B cell (primary cell): ENCODE measurements at regions of chr19 and their contacts with region 1.

Region 1: DNA sequence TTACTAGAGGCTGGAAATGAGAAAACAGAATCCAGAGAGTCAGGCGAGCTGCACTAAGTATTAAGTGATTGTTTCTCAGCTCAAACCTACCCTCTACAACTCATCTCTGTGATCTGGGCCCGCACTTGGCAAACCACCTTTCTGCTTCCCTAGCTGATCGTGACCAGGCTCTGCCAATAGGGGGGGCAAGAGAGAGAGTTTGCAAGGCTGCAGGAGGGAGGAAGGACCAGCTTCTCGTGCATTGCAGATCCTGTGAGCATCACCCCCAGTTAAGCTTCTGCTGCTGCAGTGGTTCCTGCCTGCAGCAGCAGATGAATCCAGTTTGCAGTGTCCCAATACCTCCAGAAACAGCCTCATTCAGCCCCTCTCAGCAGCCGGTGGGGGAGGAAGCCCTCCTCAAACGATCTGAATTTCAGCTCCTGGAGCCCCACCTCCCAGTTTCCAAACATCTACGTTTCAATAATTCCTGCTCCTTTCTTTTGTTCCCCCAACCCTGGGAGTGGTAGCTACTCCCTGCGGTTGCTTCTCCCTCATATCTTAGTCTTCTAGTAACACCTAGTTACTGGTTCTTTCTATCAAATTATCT is 20.0 kb downstream of the XRCC1 start:
- DNase-seq: peak; percentile 83
- ATAC-seq: peak; percentile 94
- H3K4me3 ChIP-seq: no peak overlapping the region
- H3K4me3 Mint-ChIP-seq: no peak overlapping the region
- H3K27ac ChIP-seq: no peak overlapping the region
- H3K27ac Mint-ChIP-seq: peak overlapping the region; percentile 3
- H3K4me1 ChIP-seq: peaks cover under 1 to 10% of the 10 kb centered on the region in 2 donors
- H3K4me1 Mint-ChIP-seq: peaks cover 11% of the 10 kb centered on the region
- H3K27me3 ChIP-seq: no peaks in the 10 kb centered on the region
- H3K27me3 Mint-ChIP-seq: no peaks in the 10 kb centered on the region
- CTCF ChIP-seq: peak; percentile 83

Region 2: GRCh38 chr19:43318796-43319314 is 236.4 kb before region 1 on chr19:
- CTCF ChIA-PET with region 1: no interaction called
- POLR2A ChIA-PET with region 1: no interaction called
- intact Hi-C with region 1: no loop called
- DNase-seq: no peak
- ATAC-seq: no peak
- H3K4me3 ChIP-seq: no peak overlapping the region
- H3K4me3 Mint-ChIP-seq: no peak overlapping the region
- H3K27ac ChIP-seq: no peak overlapping the region
- H3K27ac Mint-ChIP-seq: no peak overlapping the region
- H3K4me1 ChIP-seq: no peaks in the 10 kb centered on the region
- H3K4me1 Mint-ChIP-seq: no peaks in the 10 kb centered on the region
- H3K27me3 ChIP-seq: no peaks in the 10 kb centered on the region
- H3K27me3 Mint-ChIP-seq: peaks cover 8% of the 10 kb centered on the region
- CTCF ChIP-seq: no peak

Region 3: GRCh38 chr19:43575156-43575950 is 20.1 kb after region 1 on chr19 and contains the starts of genes PINLYP and XRCC1:
- CTCF ChIA-PET with region 1: interaction called, 20 read pairs
- POLR2A ChIA-PET with region 1: interaction called, 9 read pairs
- intact Hi-C with region 1: no loop called
- DNase-seq: peak; percentile 99
- ATAC-seq: peak; percentile 99
- H3K4me3 ChIP-seq: peak within 1 kb of the TSS; percentile 67 to 98 (median 82)
- H3K4me3 Mint-ChIP-seq: peak within 1 kb of the TSS; percentile 97
- H3K27ac ChIP-seq: peak within 1 kb of the TSS; percentile 74 to 89
- H3K27ac Mint-ChIP-seq: peak within 1 kb of the TSS; percentile 92
- H3K4me1 ChIP-seq: peaks cover 16 to 29% of the 10 kb centered on the region in 2 donors
- H3K4me1 Mint-ChIP-seq: peaks cover 42% of the 10 kb centered on the region
- H3K27me3 ChIP-seq: no peaks in the 10 kb centered on the region
- H3K27me3 Mint-ChIP-seq: no peaks in the 10 kb centered on the region
- CTCF ChIP-seq: no peak
- total RNA-seq, gene PINLYP: 0.97 and 2.9 TPM in 2 replicates
- total RNA-seq, gene XRCC1: 38.2 and 47.4 TPM in 2 replicates

Region 4: GRCh38 chr19:43624933-43625332 is 69.7 kb after region 1 on chr19:
- CTCF ChIA-PET with region 1: interaction called, 12 read pairs
- POLR2A ChIA-PET with region 1: no interaction called
- intact Hi-C with region 1: no loop called
- DNase-seq: peak; percentile 86
- ATAC-seq: peak; percentile 75
- H3K4me3 ChIP-seq: no peak overlapping the region
- H3K4me3 Mint-ChIP-seq: no peak overlapping the region
- H3K27ac ChIP-seq: no peak overlapping the region
- H3K27ac Mint-ChIP-seq: no peak overlapping the region
- H3K4me1 ChIP-seq: peaks cover 14% of the 10 kb centered on the region in 2 donors
- H3K4me1 Mint-ChIP-seq: peaks cover 19% of the 10 kb centered on the region
- H3K27me3 ChIP-seq: peaks cover 0 to 14% (median 7%) of the 10 kb centered on the region in 4 experiments
- H3K27me3 Mint-ChIP-seq: peaks cover 15% of the 10 kb centered on the region
- CTCF ChIP-seq: peak; percentile 61

Region 5: DNA sequence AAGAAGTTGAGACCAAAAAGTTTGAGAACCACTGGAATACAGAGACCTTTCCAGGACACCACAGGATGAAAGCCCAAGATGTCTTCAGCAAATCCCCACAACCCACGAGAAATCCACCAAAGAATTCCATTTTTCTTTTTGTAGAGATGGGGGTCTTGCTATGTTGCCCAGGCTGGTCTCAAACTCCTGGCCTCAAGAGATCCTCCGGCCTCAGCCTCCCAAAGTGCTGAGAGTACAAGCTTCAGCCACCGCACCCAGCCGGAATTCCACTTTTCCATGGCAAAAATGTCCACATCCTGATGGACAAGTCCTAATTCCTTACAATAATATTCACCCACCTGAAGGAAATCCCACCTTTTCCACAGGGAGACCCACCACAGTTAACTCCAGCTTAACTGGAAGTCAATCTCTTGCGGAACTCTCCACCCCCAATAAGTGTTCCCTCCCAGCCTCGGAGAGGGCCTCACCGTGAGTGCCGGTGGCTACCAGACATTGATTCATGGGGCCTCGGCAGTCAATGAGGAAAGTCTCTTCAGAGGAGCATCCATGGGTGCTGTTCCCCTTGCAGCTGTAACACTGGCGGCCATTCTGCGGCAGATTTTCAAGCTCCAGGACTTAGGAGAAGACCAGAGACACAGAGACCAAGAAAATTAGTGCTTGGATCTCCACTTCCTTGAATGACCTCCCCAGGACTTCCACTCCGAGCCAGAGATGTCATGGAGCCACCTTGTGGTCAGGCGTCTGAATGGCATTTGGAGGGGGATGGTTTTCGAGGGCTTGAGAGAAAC is 96.7 kb after region 1 on chr19:
- CTCF ChIA-PET with region 1: interaction called, 31 read pairs
- POLR2A ChIA-PET with region 1: no interaction called
- intact Hi-C with region 1: loop called (anchors 1 kb)
- DNase-seq: peak; percentile 75
- ATAC-seq: peak; percentile 54
- H3K4me3 ChIP-seq: no peak overlapping the region
- H3K4me3 Mint-ChIP-seq: no peak overlapping the region
- H3K27ac ChIP-seq: no peak overlapping the region
- H3K27ac Mint-ChIP-seq: no peak overlapping the region
- H3K4me1 ChIP-seq: peaks cover 0 to 5% of the 10 kb centered on the region in 2 donors
- H3K4me1 Mint-ChIP-seq: peaks cover 3% of the 10 kb centered on the region
- H3K27me3 ChIP-seq: no peaks in the 10 kb centered on the region
- H3K27me3 Mint-ChIP-seq: no peaks in the 10 kb centered on the region
- CTCF ChIP-seq: peak; percentile 72

Region 6: GRCh38 chr19:43809762-43810696 is 254.8 kb after region 1 on chr19:
- CTCF ChIA-PET with region 1: interaction called, 10 read pairs
- POLR2A ChIA-PET with region 1: no interaction called
- intact Hi-C with region 1: no loop called
- DNase-seq: peak; percentile 70
- ATAC-seq: peak; percentile 39
- H3K4me3 ChIP-seq: no peak overlapping the region
- H3K4me3 Mint-ChIP-seq: no peak overlapping the region
- H3K27ac ChIP-seq: no peak overlapping the region
- H3K27ac Mint-ChIP-seq: no peak overlapping the region
- H3K4me1 ChIP-seq: no peaks in the 10 kb centered on the region
- H3K4me1 Mint-ChIP-seq: no peaks in the 10 kb centered on the region
- H3K27me3 ChIP-seq: peaks cover 0 to 6% (median 1%) of the 10 kb centered on the region in 4 experiments
- H3K27me3 Mint-ChIP-seq: peaks cover 37% of the 10 kb centered on the region
- CTCF ChIP-seq: peak; percentile 83